Tibial artery (tissue), 4 donors: ENCODE measurements at regions of chr6 and their contacts with region 1.

Region 1: GRCh38 chr6:26514984-26515383 is 14.9 kb downstream of the BTN1A1 start:
- DNase-seq: no peak
- H3K4me3 ChIP-seq: no peak overlapping the region
- H3K27ac ChIP-seq: no peak overlapping the region
- H3K4me1 ChIP-seq: peaks cover 0 to under 1% (median 0%) of the 10 kb centered on the region in 4 donors
- H3K27me3 ChIP-seq: no peaks in the 10 kb centered on the region
- CTCF ChIP-seq: no peak

Region 2: DNA sequence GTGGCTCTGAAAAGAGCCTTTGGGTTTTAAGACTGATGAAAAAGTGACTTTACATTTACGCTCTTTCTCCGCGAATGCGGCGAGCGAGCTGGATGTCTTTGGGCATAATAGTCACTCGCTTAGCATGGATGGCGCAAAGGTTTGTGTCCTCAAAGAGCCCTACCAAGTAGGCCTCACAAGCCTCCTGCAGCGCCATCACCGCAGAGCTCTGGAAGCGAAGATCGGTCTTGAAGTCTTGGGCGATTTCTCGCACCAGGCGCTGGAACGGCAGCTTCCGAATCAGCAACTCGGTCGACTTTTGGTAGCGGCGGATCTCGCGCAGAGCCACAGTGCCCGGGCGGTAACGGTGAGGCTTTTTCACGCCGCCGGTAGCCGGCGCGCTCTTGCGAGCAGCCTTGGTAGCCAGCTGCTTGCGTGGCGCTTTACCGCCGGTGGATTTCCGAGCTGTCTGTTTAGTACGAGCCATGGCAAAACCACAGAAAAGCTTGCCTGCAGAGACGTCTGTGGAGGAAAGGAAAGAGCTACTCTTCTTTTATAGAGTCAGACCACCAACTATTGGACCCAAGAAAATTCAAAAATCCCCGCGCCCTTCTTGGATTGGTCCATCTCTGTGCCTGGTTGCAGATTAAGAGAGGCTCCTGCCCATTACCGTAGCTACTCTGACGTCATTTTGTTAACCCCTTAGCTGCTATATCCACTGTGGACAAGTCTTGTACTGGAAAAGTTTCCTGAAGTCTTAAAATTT is 483.2 kb before region 1 on chr6:
- intact Hi-C with region 1: no loop called
- DNase-seq: peak; percentile 86 to 87
- H3K4me3 ChIP-seq: peak overlapping the region; percentile 57 to 63
- H3K27ac ChIP-seq: peak overlapping the region; percentile 84 to 88
- H3K4me1 ChIP-seq: peaks cover 0 to 24% (median 12%) of the 10 kb centered on the region in 4 donors
- H3K27me3 ChIP-seq: no peaks in the 10 kb centered on the region
- CTCF ChIP-seq: peak in 1 of 2 experiments; percentile 21

Region 3: GRCh38 chr6:26411751-26412150 is 103.2 kb before region 1 on chr6:
- intact Hi-C with region 1: loop called (anchors 10 kb)
- DNase-seq: no peak
- H3K4me3 ChIP-seq: no peak overlapping the region
- H3K27ac ChIP-seq: no peak overlapping the region
- H3K4me1 ChIP-seq: no peaks in the 10 kb centered on the region
- H3K27me3 ChIP-seq: no peaks in the 10 kb centered on the region
- CTCF ChIP-seq: no peak

Region 4: GRCh38 chr6:26475823-26476729 is 38.9 kb before region 1 on chr6:
- intact Hi-C with region 1: loop called (anchors 5 kb)
- DNase-seq: no peak
- H3K4me3 ChIP-seq: no peak overlapping the region
- H3K27ac ChIP-seq: peak overlapping the region; percentile 83 to 91
- H3K4me1 ChIP-seq: peaks cover 0 to 23% (median 15%) of the 10 kb centered on the region in 4 donors
- H3K27me3 ChIP-seq: no peaks in the 10 kb centered on the region
- CTCF ChIP-seq: no peak